ENCODE measurements at regions of chr5 and their contacts with region 1.

Region 1: GRCh38 chr5:64505769-64506566 is at the start of gene RGS7BP:
- DNase-seq: peak in 1 of 2 donors; percentile 72
- H3K4me3 ChIP-seq: peak within 1 kb of the TSS; percentile 48 to 83
- H3K27ac ChIP-seq: peak within 1 kb of the TSS; percentile 67 to 69
- H3K4me1 ChIP-seq: peaks cover 0 to 3% of the 10 kb centered on the region in 2 donors
- H3K27me3 ChIP-seq: no peaks in the 10 kb centered on the region
- CTCF ChIP-seq: peak in 1 of 3 experiments; percentile 32
- total RNA-seq, gene RGS7BP: 9.2 TPM

Region 2: DNA sequence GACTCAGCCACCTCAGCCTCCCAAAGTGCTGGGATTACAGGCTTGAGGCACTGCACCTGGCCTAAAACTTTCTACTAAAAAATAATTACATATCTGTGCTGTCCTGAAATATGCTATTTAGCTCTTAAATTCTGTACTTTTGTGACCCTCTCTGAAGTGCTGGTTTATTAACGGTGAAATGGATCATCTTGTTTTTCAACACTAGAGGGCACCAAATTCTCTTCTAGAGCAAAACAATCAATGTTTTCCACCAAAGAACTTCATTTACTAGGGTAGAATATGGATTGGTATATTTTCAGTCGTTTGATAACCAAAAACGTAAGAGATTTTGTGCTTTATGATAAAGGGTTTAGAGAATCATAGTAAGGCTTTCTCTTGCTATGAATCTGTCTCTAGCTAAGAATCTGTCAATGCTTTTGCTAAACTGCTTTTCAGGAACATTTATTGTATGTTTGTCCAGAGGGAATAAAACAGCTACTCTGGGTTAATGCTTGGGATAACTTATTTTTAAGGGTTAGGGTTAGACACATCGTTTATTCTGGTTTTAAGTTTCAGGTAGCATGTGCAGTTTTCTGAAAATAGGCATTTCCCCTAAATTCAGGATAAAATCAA is 276.7 kb before region 1 on chr5:
- intact Hi-C with region 1: loop called (anchors 5 kb)
- DNase-seq: no peak
- H3K4me3 ChIP-seq: no peak overlapping the region
- H3K27ac ChIP-seq: no peak overlapping the region
- H3K4me1 ChIP-seq: no peaks in the 10 kb centered on the region
- H3K27me3 ChIP-seq: no peaks in the 10 kb centered on the region
- CTCF ChIP-seq: peak; percentile 38 to 75 (median 42)

Region 3: DNA sequence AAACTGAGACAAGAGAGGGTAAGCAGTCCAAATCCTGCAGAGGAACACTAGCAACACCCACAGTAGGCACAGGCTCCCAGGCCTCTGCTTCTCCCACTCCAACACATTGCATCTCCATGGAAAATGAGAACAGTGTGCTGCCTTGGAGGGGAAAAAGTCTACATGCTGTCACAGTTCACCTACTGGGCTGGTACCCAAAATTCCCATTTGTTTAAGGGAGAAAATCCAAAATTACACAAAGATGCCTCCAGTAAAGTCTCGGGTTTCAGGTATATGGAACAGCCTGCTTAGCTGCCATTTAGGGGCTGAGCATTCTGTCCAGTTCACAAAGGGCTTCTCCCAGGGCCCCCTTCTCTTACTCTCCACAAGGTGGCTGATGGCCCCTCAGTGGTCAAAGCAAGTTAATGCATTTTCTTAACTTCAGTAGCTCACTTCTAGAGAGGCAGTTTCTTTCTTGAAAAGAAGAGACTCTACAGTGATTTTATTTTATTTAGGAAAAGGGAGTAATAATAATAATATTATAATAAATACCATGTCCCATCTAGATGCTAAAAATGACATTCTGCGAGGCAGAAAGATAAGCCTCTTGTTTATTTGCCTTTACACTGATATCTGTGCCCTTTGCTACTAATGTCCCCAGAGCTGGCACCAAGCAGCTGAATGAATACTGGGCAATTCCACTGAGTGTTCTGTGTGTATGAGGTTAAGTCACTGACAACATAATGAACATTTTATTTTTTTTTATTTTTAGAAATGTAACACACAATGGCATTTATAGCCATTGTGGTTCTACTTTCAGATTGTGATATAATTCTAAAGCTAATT is 89.3 kb after region 1 on chr5:
- intact Hi-C with region 1: loop called (anchors 1 kb)
- DNase-seq: no peak
- H3K4me3 ChIP-seq: no peak overlapping the region
- H3K27ac ChIP-seq: peak overlapping the region; percentile 6 to 59
- H3K4me1 ChIP-seq: peaks cover 0 to 6% of the 10 kb centered on the region in 2 donors
- H3K27me3 ChIP-seq: no peaks in the 10 kb centered on the region
- CTCF ChIP-seq: peak; percentile 35 to 69 (median 43)

Region 4: DNA sequence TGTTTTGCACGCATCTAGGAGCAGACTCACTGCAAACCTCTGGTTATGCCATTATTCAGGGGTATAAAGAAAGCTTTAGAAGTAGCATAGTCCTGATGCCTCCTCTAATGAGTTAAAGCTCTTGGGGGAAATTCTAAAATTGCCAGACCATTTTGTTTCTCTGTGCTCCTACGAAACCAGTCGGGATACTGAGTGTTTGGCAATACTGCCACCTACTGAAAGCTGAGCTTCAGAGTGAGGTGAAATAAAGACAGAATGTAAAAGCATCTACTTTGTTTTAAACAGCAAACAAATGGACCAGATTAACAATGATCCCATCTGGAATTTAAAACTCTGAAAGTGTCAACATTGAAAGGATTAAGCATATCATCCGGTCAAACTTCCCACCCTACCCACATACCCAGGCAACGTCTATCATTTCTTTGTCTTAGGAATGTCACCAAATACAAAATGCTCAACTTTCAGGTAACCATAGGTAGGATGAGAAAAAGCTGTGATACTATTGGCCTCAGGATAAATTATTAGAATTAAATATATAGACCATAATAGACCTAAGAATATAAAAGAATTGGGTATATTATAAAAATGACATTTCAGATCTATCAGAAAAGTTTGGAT is 106.5 kb after region 1 on chr5:
- intact Hi-C with region 1: loop called (anchors 2 kb)
- DNase-seq: peak in 1 of 2 donors; percentile 69
- H3K4me3 ChIP-seq: no peak overlapping the region
- H3K27ac ChIP-seq: no peak overlapping the region
- H3K4me1 ChIP-seq: no peaks in the 10 kb centered on the region
- H3K27me3 ChIP-seq: no peaks in the 10 kb centered on the region
- CTCF ChIP-seq: peak; percentile 70 to 80 (median 71)

Region 5: GRCh38 chr5:64690417-64691151 is 184.6 kb after region 1 on chr5 and contains the start of gene SHISAL2B:
- intact Hi-C with region 1: no loop called
- DNase-seq: no peak
- H3K4me3 ChIP-seq: peak within 1 kb of the TSS; percentile 39 to 48
- H3K27ac ChIP-seq: no peak within 1 kb of the TSS
- H3K4me1 ChIP-seq: no peaks in the 10 kb centered on the region
- H3K27me3 ChIP-seq: no peaks in the 10 kb centered on the region
- CTCF ChIP-seq: no peak
- total RNA-seq, gene SHISAL2B: not detected

Region 6: DNA sequence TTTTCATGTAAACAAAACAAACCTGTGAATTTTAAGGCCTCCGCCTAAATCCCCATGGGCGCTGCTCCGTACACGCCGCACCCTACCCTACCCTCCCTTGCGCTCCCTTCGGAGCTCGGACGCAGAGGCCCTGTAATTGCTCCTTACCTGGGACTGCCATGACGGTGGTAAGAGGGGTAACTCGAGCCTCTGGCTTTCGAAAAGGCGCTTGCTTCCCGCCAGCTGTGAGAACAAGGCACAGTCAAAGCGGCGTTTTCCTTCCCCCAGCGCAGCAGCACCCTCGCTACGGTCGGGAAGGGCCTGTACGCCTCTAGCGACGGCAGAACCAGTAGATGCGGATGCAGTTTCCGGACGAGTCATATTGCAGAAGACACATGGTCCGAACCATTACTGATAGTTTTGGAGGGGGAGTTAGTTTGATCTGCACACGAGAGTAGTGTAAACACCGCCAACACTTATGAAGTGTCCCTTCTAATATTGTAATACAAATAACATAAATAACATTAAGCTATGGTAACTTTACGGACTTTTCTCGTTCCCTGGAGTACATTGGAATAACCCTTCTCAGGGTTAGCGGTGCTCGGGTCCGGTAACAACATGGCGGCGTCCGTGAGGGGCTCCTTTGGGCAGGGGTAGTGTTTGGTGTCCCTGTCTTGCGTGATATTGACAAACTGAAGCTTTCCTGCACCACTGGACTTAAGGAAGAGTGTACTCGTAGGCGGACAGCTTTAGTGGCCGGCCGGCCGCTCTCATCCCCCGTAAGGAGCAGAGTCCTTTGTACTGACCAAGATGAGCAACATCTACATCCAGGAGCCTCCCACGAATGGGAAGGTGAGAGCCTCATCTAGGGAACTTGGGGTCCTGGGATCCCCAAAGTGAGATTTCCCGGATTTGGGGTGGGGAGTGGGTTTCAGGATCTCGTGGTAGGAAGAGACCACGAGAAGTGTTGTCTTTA is 262.7 kb after region 1 on chr5 and contains the starts of genes CWC27 and SREK1IP1:
- intact Hi-C with region 1: loop called (anchors 10 kb)
- DNase-seq: peak; percentile 13 to 87
- H3K4me3 ChIP-seq: peak within 1 kb of the TSS; percentile 63 to 84
- H3K27ac ChIP-seq: peak within 1 kb of the TSS; percentile 75 to 85
- H3K4me1 ChIP-seq: peaks cover 7 to 27% of the 10 kb centered on the region in 2 donors
- H3K27me3 ChIP-seq: no peaks in the 10 kb centered on the region
- CTCF ChIP-seq: no peak
- total RNA-seq, gene CWC27: 1.7 TPM
- total RNA-seq, gene SREK1IP1: 7.9 TPM

Measured in ascending aorta (tissue), 2 donors.